ENCODE measurements at regions of chr5 and their contacts with region 1.

Region 1: DNA sequence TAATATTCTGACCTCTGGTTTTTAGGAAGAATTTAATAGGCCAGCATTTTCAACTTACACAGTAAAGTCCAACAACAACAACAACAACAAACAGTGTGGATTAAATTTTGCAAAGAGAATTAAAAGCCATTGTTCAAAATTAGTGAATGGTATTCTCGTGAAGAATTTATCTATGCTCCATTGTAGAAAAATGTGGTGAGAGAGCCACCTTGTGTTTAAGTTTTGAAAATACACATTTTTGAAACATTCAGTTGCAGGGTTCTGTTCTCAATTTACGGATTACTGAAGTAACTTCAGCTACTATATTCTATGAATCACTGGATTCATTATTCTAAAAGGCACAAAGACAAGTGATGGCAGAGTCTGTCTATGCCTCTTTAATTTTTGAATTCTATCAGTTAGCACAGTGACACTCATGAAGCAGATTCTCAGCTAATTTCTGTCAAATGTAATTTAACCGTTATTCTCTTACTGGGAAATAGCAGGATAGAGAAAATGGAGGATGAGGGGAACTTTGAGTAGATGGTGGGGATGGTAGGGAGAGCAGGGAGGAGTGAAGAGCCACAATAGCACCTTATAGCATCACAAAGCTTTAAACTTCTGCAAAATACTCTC is 11.0 kb downstream of the CCDC152 start:
- H3K4me3 Mint-ChIP-seq: no peak overlapping the region
- H3K27ac Mint-ChIP-seq: no peak overlapping the region
- H3K4me1 Mint-ChIP-seq: no peaks in the 10 kb centered on the region
- H3K27me3 Mint-ChIP-seq: peaks cover 1% of the 10 kb centered on the region

Region 2: DNA sequence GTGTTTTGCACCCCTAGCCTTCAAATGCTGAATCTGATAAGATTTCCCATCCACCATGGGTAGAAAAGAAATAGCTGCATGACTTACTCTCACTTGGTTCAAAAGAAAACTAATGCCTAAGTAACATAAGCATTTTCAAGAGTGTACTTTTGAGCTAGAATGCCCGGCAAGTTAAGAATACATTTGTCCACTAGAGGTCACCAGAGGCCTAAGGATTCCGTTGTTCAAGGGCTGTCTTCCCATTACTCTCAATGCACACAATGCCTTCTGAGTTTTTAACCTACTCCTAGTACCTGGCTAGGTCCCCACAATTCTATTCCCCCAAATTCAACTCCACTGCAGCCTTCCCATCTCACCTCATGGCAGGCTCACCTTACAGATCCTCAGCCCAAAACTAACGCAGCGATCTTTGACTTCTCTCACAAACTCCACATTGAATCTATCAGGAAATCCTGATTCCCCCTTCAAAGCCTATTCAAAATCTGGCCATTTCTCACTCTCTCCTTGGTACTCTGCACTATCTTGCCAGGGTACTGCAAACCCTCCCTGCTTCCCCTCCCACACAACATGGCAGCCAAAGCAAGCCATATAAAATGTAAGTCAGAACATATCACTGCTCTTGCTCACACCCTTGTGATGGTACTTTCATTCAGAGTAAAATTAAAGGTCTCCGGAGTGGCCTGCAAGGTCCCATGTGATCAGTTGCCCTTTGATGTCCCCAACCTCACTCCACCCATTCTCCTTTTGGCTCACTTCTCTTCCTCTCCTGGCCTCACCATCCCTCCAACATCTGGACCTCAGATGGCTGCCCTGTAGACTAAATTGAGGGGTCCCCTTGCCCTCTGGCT is 910.7 kb before region 1 on chr5:
- intact Hi-C with region 1: loop called (anchors 2 kb)
- H3K4me3 Mint-ChIP-seq: no peak overlapping the region
- H3K27ac Mint-ChIP-seq: no peak overlapping the region
- H3K4me1 Mint-ChIP-seq: no peaks in the 10 kb centered on the region
- H3K27me3 Mint-ChIP-seq: no peaks in the 10 kb centered on the region

Region 3: DNA sequence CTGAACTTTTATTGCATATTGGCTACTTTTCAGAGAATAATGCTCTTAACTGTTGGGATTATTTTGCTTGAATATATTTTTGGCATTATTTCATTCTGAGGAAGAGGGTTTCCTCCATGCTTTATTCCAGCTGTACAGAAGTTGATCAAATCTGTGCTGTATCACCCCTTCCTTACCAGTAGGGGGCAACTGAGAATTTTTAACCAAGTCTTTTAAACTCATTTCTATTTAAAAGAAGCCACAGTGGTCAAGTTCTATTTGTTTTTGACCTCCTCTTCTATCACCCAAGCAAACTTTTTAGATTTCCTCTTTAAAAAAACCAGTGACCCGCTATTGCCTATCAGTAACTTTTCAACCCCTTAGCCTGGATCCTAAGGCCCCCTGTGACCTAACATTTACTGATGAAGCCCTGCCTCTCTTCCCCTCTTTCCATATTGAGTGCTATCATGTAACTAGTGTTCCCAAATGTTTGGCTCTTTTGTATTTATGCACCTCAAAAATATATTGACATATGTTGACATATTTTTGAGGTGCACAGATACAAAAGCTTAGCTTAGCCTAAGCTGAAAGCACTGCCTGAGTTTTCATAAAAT is 761.9 kb before region 1 on chr5:
- intact Hi-C with region 1: loop called (anchors 2 kb)
- H3K4me3 Mint-ChIP-seq: no peak overlapping the region
- H3K27ac Mint-ChIP-seq: no peak overlapping the region
- H3K4me1 Mint-ChIP-seq: no peaks in the 10 kb centered on the region
- H3K27me3 Mint-ChIP-seq: no peaks in the 10 kb centered on the region

Region 4: DNA sequence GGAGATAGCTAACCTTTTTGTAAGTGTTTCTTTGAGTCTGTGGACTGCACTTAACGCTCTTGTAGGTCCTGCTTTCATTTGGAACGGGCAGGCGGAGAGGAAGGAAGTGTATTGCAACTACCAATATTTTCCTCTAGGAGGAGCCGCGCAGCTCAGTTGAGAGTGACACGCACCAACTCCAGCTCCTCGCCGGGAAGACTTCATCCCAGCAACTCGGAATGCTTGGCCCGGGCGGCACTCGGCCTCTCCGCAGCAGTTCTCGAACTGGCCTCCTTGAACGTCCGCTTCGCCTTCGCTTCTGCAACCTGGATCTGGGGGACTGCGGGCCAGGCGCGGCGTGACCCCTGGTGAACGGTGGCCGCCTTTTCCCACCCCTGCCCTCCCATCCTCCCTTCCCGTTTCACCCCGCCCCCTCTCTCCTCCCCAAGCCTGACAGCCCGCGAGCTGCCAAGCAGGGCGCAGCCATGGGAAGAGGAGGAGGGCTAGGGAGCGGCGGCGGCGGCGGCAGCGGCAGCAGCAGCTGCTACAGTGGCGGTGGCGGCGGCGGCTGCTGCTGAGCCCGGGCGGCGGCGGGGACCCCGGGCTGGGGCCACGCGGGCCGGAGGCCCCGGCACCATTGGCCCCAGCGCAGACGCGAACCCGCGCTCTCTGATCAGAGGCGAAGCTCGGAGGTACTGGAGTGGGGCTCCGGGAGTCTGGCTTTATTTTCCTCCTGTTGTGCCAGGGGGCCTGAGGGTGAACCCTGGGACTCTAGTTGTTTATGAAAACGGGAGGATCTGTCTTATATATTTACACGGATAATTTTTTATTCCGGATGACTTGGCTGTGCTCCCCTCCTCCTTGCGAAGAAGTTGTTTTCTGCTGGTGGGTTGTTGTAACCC is 344.1 kb before region 1 on chr5 and contains the start of gene GHR:
- intact Hi-C with region 1: loop called (anchors 5 kb)
- H3K4me3 Mint-ChIP-seq: no peak within 1 kb of the TSS
- H3K27ac Mint-ChIP-seq: no peak within 1 kb of the TSS
- H3K4me1 Mint-ChIP-seq: no peaks in the 10 kb centered on the region
- H3K27me3 Mint-ChIP-seq: peaks cover 5% of the 10 kb centered on the region

Region 5: GRCh38 chr5:42889311-42889933 is 121.8 kb after region 1 on chr5:
- intact Hi-C with region 1: loop called (anchors 2 kb)
- H3K4me3 Mint-ChIP-seq: no peak overlapping the region
- H3K27ac Mint-ChIP-seq: no peak overlapping the region
- H3K4me1 Mint-ChIP-seq: no peaks in the 10 kb centered on the region
- H3K27me3 Mint-ChIP-seq: no peaks in the 10 kb centered on the region

Region 6: GRCh38 chr5:43019614-43020293 is 252.2 kb after region 1 on chr5:
- intact Hi-C with region 1: no loop called
- H3K4me3 Mint-ChIP-seq: peak overlapping the region; percentile 89
- H3K27ac Mint-ChIP-seq: peak overlapping the region; percentile 99
- H3K4me1 Mint-ChIP-seq: peaks cover 37% of the 10 kb centered on the region
- H3K27me3 Mint-ChIP-seq: no peaks in the 10 kb centered on the region

Measured in dendritic cell treated with granulocyte-macrophage colony-stimulating factor and Interleukin-4, amounts not matched to agents 40 ng/mL and 50 ng/mL, for 4 days (primary cell).